ENCODE measurements at regions of chr17 and their contacts with region 1.

Region 1: GRCh38 chr17:59753522-59754467 is 46.3 kb downstream of the VMP1 start:
- DNase-seq: no peak
- ATAC-seq: peak; percentile 89 to 91
- H3K4me3 ChIP-seq: no peak overlapping the region
- H3K27ac ChIP-seq: no peak overlapping the region
- H3K4me1 ChIP-seq: no peaks in the 10 kb centered on the region
- H3K27me3 ChIP-seq: no peaks in the 10 kb centered on the region

Region 2: DNA sequence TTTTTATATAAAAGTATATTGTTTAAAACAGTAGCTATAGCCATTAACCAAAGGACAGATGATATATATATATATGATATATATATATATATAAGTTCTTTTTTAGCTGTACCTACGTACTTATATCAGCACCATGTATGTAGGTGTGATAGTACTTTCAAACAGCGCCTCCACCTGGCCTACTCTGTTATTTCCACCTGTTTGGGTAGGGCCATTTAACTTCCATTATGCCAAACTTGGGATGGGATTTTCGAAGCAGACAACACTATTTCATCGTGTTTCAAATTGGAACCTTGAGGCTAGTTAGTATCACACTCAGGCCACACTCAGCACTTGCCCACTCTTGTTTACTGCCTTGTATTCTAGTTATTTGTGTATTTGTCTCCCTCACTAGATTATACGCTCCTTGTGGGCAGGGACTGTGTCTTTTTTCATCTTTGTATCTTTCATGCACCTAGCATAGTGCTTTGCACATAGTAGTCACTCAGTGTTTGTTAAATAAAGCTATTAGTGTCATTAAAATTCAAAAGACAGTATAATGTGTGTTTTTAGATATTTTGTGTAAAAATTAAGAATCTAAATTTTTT is 145.9 kb before region 1 on chr17:
- intact Hi-C with region 1: no loop called
- DNase-seq: no peak
- ATAC-seq: no peak
- H3K4me3 ChIP-seq: no peak overlapping the region
- H3K27ac ChIP-seq: no peak overlapping the region
- H3K4me1 ChIP-seq: no peaks in the 10 kb centered on the region
- H3K27me3 ChIP-seq: no peaks in the 10 kb centered on the region

Region 3: GRCh38 chr17:59837308-59838051 is 83.7 kb after region 1 on chr17:
- intact Hi-C with region 1: loop called in 2 of 4 experiments (anchors 5 to 10 kb)
- DNase-seq: peak in 1 of 3 donors; percentile 49
- ATAC-seq: peak; percentile 95 to 97
- H3K4me3 ChIP-seq: peak overlapping the region; percentile 100
- H3K27ac ChIP-seq: peak overlapping the region; percentile 93
- H3K4me1 ChIP-seq: peaks cover 5% of the 10 kb centered on the region
- H3K27me3 ChIP-seq: no peaks in the 10 kb centered on the region

Measured in right cardiac atrium (tissue), 5 donors.